Astrocyte of the cerebellum (primary cell): ENCODE measurements at regions of chr10 and their contacts with region 1.

Region 1: DNA sequence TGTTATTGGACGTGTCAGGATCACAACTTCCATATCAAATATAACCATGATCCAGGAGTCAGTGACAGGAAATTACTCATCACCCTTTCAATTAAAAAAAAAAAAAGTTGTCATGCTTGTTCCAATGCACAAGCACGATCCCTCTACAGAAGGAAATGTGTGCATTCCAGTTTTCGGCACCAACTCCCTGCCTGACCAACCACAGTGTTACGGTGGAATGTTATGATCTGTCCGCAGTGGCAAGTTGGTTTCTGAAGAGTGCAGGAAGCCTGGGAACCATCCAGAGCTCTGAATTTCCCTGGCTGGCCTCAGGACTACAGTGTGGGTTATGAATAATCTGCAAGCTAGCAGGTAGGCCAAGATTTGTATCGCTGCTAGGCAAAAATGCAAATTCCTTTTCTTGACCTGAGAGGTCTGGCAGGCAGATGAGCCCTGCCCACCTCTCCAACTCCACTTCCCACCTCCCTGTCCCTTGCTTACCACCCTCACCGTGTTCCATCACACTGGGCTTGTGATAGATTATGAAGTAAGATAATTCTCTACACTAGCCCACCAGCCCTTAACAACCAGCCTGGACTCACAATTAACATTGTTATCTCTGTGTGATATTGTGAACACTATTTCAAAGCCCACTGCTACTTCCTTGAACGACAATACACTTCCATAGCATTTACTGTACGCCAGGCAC is 20.4 kb downstream of the FRMPD2 start:
- DNase-seq: peak; percentile 93
- H3K4me3 ChIP-seq: no peak overlapping the region
- CTCF ChIP-seq: no peak

Region 2: DNA sequence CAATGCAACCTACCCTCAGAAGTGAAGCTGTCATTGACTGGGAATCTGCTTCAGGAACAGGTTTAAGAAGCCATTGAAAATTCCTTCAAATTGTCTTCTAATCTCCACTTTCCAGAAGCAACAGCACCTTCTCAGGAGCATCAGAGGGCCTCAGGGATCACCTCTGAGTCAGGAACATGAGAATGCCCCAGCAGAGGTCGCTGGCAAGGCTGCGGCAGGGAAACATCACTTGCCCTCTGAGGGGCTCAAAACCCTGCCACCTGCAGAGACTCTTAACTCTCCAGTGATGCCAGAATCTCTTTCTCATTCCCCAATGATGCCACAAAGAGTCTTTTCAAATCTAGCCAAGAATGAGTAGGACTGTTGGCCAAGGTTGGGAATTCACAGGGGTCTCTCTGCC is 46.4 kb after region 1 on chr10:
- in situ Hi-C with region 1: loop called (anchors 5 kb)
- DNase-seq: no peak
- H3K4me3 ChIP-seq: no peak overlapping the region
- CTCF ChIP-seq: no peak